Gastrocnemius medialis (tissue), 4 donors: ENCODE measurements at regions of chr5 and their contacts with region 1.

Region 1: GRCh38 chr5:67149951-67150523 is 46.6 kb downstream of the CD180 start:
- DNase-seq: no peak
- ATAC-seq: no peak
- H3K4me3 ChIP-seq: peak overlapping the region in 1 of 4 donors; percentile 9
- H3K27ac ChIP-seq: peak overlapping the region in 1 of 4 donors; percentile 22
- H3K4me1 ChIP-seq: peaks cover 12 to 14% of the 10 kb centered on the region in 2 donors
- H3K27me3 ChIP-seq: no peaks in the 10 kb centered on the region
- CTCF ChIP-seq: peak in 4 of 5 experiments; percentile 5 to 35 (median 25)
- POLR2A ChIP-seq: no peak

Region 2: GRCh38 chr5:66814146-66814991 is 335.7 kb before region 1 on chr5:
- in situ Hi-C with region 1: loop called in 1 of 4 experiments (anchors 10 kb)
- intact Hi-C with region 1: loop called (anchors 5 kb)
- DNase-seq: no peak
- ATAC-seq: peak in 1 of 2 donors; percentile 33
- H3K4me3 ChIP-seq: no peak overlapping the region
- H3K27ac ChIP-seq: no peak overlapping the region
- H3K4me1 ChIP-seq: no peaks in the 10 kb centered on the region
- H3K27me3 ChIP-seq: no peaks in the 10 kb centered on the region
- CTCF ChIP-seq: peak; percentile 30 to 68 (median 48)
- POLR2A ChIP-seq: no peak

Region 3: GRCh38 chr5:67338421-67338820 is 188.4 kb after region 1 on chr5:
- in situ Hi-C with region 1: no loop called
- intact Hi-C with region 1: no loop called
- DNase-seq: no peak
- ATAC-seq: no peak
- H3K4me3 ChIP-seq: no peak overlapping the region
- H3K27ac ChIP-seq: no peak overlapping the region
- H3K4me1 ChIP-seq: no peaks in the 10 kb centered on the region
- H3K27me3 ChIP-seq: no peaks in the 10 kb centered on the region
- CTCF ChIP-seq: no peak
- POLR2A ChIP-seq: no peak